CD4-positive, alpha-beta T cell (primary cell): ENCODE measurements at regions of chr6 and their contacts with region 1.

Region 1: GRCh38 chr6:169654598-169655391 is 47.0 kb downstream of the WDR27 start:
- DNase-seq: peak; percentile 14 to 88 (median 66)
- ATAC-seq: peak; percentile 95
- H3K4me3 ChIP-seq: peak overlapping the region; percentile 74
- H3K4me3 Mint-ChIP-seq: peak overlapping the region; percentile 91
- H3K27ac ChIP-seq: peak overlapping the region; percentile 42 to 44
- H3K27ac Mint-ChIP-seq: peak overlapping the region; percentile 87
- H3K4me1 ChIP-seq: peaks cover 10% of the 10 kb centered on the region
- H3K4me1 Mint-ChIP-seq: peaks cover 18% of the 10 kb centered on the region
- H3K27me3 ChIP-seq: no peaks in the 10 kb centered on the region
- H3K27me3 Mint-ChIP-seq: no peaks in the 10 kb centered on the region
- CTCF ChIP-seq: no peak

Region 2: DNA sequence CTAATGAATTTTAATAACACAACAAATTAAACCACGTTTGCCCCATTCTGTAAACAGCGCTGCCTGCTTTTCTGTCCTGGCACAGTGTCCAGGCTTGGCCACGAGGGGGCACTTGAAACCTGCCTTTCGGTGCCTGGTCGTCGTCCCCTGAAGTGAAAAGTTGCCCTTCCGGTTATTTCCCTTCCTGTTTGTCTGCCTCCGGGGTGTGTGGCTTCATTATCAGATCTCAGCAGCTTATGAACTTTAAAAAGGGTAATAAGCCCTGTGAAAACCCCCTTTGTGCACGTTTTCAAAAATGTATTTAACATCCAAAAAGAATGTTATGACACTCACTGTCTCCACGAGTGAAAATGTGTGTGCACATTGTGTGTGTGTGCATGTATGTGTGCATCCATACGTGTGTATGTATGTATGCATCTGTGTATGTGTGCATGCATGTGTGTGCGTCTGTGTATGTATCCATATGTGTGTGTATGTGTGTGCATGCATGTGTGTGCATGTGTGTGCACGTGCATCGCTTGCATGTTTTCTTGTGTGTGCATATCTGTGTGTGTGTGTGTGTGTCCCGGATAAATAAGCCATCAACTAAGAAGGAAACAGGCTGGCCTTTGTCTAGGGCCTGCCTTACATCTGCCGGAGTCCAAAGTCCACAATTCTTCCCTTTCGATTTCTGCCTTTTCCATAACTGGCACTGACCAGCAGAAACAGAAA is 759.5 kb before region 1 on chr6:
- CTCF ChIA-PET with region 1: no interaction called
- POLR2A ChIA-PET with region 1: no interaction called
- intact Hi-C with region 1: loop called in 1 of 2 experiments (anchors 2 kb)
- DNase-seq: peak; percentile 62 to 87 (median 74)
- ATAC-seq: peak; percentile 96
- H3K4me3 ChIP-seq: peak overlapping the region; percentile 28
- H3K4me3 Mint-ChIP-seq: peak overlapping the region; percentile 4
- H3K27ac ChIP-seq: no peak overlapping the region
- H3K27ac Mint-ChIP-seq: no peak overlapping the region
- H3K4me1 ChIP-seq: peaks cover 8% of the 10 kb centered on the region
- H3K4me1 Mint-ChIP-seq: peaks cover 15% of the 10 kb centered on the region
- H3K27me3 ChIP-seq: no peaks in the 10 kb centered on the region
- H3K27me3 Mint-ChIP-seq: no peaks in the 10 kb centered on the region
- CTCF ChIP-seq: peak; percentile 83

Region 3: DNA sequence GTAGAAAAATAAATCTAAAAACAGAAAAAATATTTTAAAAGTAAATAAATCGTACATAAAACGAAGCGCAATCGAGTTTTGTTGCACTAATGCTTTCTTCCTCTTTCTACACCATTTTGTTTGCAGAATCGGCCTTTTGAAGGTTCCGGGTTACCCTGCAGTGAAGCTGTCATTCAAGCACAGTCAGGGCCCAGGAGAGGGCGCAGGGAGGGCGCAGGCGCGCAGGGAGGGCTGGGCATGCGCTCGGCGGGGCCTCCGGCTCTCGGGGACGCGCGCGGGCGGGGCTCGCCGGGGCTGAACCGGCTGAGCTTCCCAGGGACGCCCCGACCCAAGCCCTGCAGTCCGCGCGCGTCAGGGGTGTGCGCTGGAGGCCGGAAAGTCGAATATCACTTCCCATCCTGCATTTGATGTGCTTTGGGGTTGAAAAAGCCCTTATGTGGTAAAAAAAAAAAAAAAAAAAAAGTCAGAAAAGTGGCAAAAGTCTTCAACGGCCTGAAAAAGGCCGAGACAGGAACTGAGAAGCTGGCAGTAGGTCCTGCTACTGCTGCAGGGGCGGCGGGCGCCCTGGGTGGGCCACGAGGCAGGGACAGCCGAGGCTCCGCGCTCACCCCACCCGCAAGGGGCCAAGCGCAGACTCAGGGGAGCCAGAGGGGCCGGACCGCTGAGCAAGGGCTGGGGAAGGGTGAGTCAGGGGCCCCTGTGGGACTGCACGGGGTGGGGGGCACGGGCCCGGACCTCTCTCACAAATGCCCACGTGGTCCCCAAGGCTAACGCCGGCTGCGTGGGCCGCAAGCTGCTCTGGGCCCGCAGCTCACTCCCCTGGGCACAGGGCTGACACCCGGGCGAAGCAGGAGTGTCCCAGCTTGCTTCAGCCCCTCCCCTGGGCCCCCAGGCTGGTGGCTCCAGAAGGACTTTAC is 441.6 kb before region 1 on chr6:
- CTCF ChIA-PET with region 1: no interaction called
- POLR2A ChIA-PET with region 1: interaction called, 3 read pairs
- intact Hi-C with region 1: loop called (anchors 2 to 5 kb)
- DNase-seq: peak; percentile 77 to 95 (median 85)
- ATAC-seq: peak; percentile 98
- H3K4me3 ChIP-seq: peak overlapping the region; percentile 35
- H3K4me3 Mint-ChIP-seq: peak overlapping the region; percentile 78
- H3K27ac ChIP-seq: no peak overlapping the region
- H3K27ac Mint-ChIP-seq: peak overlapping the region; percentile 79
- H3K4me1 ChIP-seq: peaks cover 12% of the 10 kb centered on the region
- H3K4me1 Mint-ChIP-seq: peaks cover 25% of the 10 kb centered on the region
- H3K27me3 ChIP-seq: no peaks in the 10 kb centered on the region
- H3K27me3 Mint-ChIP-seq: no peaks in the 10 kb centered on the region
- CTCF ChIP-seq: no peak

Region 4: DNA sequence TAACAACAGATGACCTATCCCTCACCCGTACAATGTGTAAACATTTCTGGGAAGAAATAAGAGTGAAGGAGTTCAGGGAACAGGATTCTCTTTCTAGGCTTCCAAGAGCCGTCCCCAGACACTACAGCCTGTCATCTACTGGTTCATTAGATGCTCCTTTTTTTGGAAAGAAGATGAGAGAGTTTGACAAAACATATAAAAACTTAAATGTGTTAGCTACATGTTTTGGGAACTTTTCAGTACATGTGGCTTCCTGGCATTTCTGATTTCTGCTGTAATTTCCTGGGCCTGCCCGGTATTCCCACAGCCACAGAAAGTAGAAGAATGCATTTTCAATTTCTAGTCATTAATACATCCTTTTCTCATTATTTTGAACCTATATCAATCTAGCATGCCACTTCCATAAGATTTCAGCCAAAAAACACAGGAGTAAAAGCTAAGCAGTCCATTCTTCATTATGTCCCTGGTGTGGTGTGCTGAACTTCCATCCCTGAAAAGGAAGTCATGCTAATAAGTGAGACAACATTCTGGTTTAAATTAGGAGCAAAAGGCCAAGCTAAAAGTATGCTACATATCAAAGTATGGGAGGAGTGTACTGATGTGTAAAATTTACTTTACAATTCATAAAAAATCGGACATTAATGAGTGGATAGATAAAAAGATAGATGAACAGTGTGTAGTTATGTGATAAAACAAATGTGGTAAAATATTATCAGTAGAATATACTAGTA is 151.2 kb before region 1 on chr6:
- CTCF ChIA-PET with region 1: no interaction called
- POLR2A ChIA-PET with region 1: no interaction called
- intact Hi-C with region 1: loop called in 1 of 2 experiments (anchors 10 kb)
- DNase-seq: no peak
- ATAC-seq: no peak
- H3K4me3 ChIP-seq: no peak overlapping the region
- H3K4me3 Mint-ChIP-seq: no peak overlapping the region
- H3K27ac ChIP-seq: no peak overlapping the region
- H3K27ac Mint-ChIP-seq: no peak overlapping the region
- H3K4me1 ChIP-seq: no peaks in the 10 kb centered on the region
- H3K4me1 Mint-ChIP-seq: no peaks in the 10 kb centered on the region
- H3K27me3 ChIP-seq: no peaks in the 10 kb centered on the region
- H3K27me3 Mint-ChIP-seq: no peaks in the 10 kb centered on the region
- CTCF ChIP-seq: no peak